SK-N-SH (cell line): ENCODE measurements at regions of chr4 and their contacts with region 1.

Region 1: DNA sequence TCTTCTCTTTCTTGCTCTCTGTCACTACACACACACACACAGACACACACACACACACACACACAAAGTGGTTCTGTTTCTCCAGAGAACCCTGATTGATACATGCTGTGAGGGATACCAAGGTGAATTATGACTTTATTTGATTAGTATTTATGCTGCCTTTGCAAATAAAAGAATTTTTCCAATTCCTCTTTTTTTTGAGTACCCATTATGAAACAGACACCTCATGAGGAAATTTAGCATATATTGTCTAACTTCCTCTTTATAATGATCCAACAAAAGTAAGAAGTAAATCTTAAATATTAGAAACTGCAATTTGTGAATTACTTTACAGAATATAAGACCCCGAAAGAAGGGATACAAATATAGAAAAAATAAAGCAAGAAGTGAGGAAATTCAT is 14.3 kb upstream of the RAB28 start:
- DNase-seq: no peak
- H3K4me3 ChIP-seq: no peak overlapping the region
- H3K27ac ChIP-seq: no peak overlapping the region
- H3K4me1 ChIP-seq: no peaks in the 10 kb centered on the region
- H3K27me3 ChIP-seq: peaks cover 20% of the 10 kb centered on the region; the same call in 1 of the 2 replicates
- CTCF ChIP-seq: no peak
- EP300 ChIP-seq: no peak
- RAD21 ChIP-seq: no peak

Region 2: DNA sequence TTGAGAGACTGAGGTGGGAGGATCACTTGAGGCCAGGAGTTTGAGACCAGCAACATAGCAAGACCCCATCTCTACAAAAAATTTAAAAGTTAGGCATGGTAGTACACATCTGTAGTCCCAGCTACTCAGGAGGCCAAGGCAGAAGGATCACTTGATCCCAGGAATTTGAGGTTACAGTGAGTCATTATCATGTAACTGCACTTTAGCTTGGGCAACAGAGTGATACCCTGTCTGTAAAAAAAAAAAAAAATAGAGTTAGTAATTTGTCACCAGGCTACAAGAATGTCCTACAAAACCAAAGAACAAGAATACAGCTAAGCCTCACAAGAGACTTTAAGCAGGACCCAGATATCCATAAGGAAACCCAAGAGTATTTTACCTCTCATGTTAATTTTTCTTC is 12.6 kb after region 1 on chr4:
- CTCF ChIA-PET with region 1: interaction called, 10 read pairs
- POLR2A ChIA-PET with region 1: no interaction called
- DNase-seq: no peak
- H3K4me3 ChIP-seq: no peak overlapping the region
- H3K27ac ChIP-seq: no peak overlapping the region
- H3K4me1 ChIP-seq: no peaks in the 10 kb centered on the region
- H3K27me3 ChIP-seq: no peaks in the 10 kb centered on the region
- CTCF ChIP-seq: no peak
- EP300 ChIP-seq: no peak
- RAD21 ChIP-seq: no peak

Region 3: GRCh38 chr4:13678186-13678924 is 179.9 kb after region 1 on chr4:
- CTCF ChIA-PET with region 1: no interaction called
- POLR2A ChIA-PET with region 1: no interaction called
- DNase-seq: no peak
- H3K4me3 ChIP-seq: no peak overlapping the region
- H3K27ac ChIP-seq: no peak overlapping the region
- H3K4me1 ChIP-seq: peaks cover 0 to 3% of the 10 kb centered on the region in 2 experiments; a peak in 2 of 4 replicates
- H3K27me3 ChIP-seq: no peaks in the 10 kb centered on the region
- CTCF ChIP-seq: no peak
- EP300 ChIP-seq: no peak
- RAD21 ChIP-seq: no peak